ENCODE measurements at regions of chr11 and their contacts with region 1.

Region 1: GRCh38 chr11:116772443-116773202 is at the start of gene BUD13:
- DNase-seq: peak; percentile 96 to 99
- H3K4me3 ChIP-seq: peak within 1 kb of the TSS; percentile 93
- H3K4me3 Mint-ChIP-seq: peak within 1 kb of the TSS; percentile 99
- H3K27ac Mint-ChIP-seq: peak within 1 kb of the TSS; percentile 98
- H3K4me1 ChIP-seq: peaks cover 26% of the 10 kb centered on the region
- H3K4me1 Mint-ChIP-seq: peaks cover 37% of the 10 kb centered on the region
- H3K27me3 ChIP-seq: no peaks in the 10 kb centered on the region
- H3K27me3 Mint-ChIP-seq: no peaks in the 10 kb centered on the region
- CTCF ChIP-seq: peak in 1 of 2 experiments; percentile 54
- total RNA-seq, gene BUD13: 37.8 and 42.6 TPM in 2 replicates

Region 2: GRCh38 chr11:116787786-116788486 is 15.3 kb after region 1 on chr11 and contains the start of gene ZPR1:
- CTCF ChIA-PET with region 1: interaction called, 5 read pairs
- POLR2A ChIA-PET with region 1: interaction called, 5 read pairs
- intact Hi-C with region 1: loop called (anchors 1 kb)
- DNase-seq: peak; percentile 84 to 90
- H3K4me3 ChIP-seq: peak within 1 kb of the TSS; percentile 80
- H3K4me3 Mint-ChIP-seq: peak within 1 kb of the TSS; percentile 80
- H3K27ac Mint-ChIP-seq: peak within 1 kb of the TSS; percentile 94
- H3K4me1 ChIP-seq: peaks cover 46% of the 10 kb centered on the region
- H3K4me1 Mint-ChIP-seq: peaks cover 42% of the 10 kb centered on the region
- H3K27me3 ChIP-seq: no peaks in the 10 kb centered on the region
- H3K27me3 Mint-ChIP-seq: no peaks in the 10 kb centered on the region
- CTCF ChIP-seq: no peak
- total RNA-seq, gene ZPR1: 168 and 194 TPM in 2 replicates

Region 3: GRCh38 chr11:116829525-116830183 is 57.0 kb after region 1 on chr11 and contains the start of gene APOC3:
- CTCF ChIA-PET with region 1: interaction called, 8 read pairs
- POLR2A ChIA-PET with region 1: interaction called, 5 read pairs
- intact Hi-C with region 1: loop called (anchors 1 kb)
- DNase-seq: peak; percentile 93 to 96
- H3K4me3 ChIP-seq: peak within 1 kb of the TSS; percentile 3; the same call in 1 of the 2 replicates
- H3K4me3 Mint-ChIP-seq: peak within 1 kb of the TSS; percentile 50
- H3K27ac Mint-ChIP-seq: peak within 1 kb of the TSS; percentile 89
- H3K4me1 ChIP-seq: peaks cover 84% of the 10 kb centered on the region
- H3K4me1 Mint-ChIP-seq: peaks cover 49% of the 10 kb centered on the region
- H3K27me3 ChIP-seq: no peaks in the 10 kb centered on the region
- H3K27me3 Mint-ChIP-seq: no peaks in the 10 kb centered on the region
- CTCF ChIP-seq: no peak
- total RNA-seq, gene APOC3: 103 and 128 TPM in 2 replicates

Region 4: GRCh38 chr11:116842909-116843308 is 70.3 kb after region 1 on chr11:
- CTCF ChIA-PET with region 1: interaction called, 15 read pairs
- POLR2A ChIA-PET with region 1: interaction called, 10 read pairs
- intact Hi-C with region 1: no loop called
- DNase-seq: peak; percentile 79 to 95
- H3K4me3 ChIP-seq: no peak overlapping the region
- H3K4me3 Mint-ChIP-seq: peak overlapping the region; percentile 50
- H3K27ac Mint-ChIP-seq: peak overlapping the region; percentile 93
- H3K4me1 ChIP-seq: peaks cover 61% of the 10 kb centered on the region
- H3K4me1 Mint-ChIP-seq: peaks cover 45% of the 10 kb centered on the region
- H3K27me3 ChIP-seq: no peaks in the 10 kb centered on the region
- H3K27me3 Mint-ChIP-seq: no peaks in the 10 kb centered on the region
- CTCF ChIP-seq: no peak

Region 5: GRCh38 chr11:117072517-117073461 is 300.2 kb after region 1 on chr11:
- CTCF ChIA-PET with region 1: no interaction called
- POLR2A ChIA-PET with region 1: no interaction called
- intact Hi-C with region 1: loop called (anchors 1 kb)
- DNase-seq: peak in 1 of 2 experiments; percentile 78
- H3K4me3 ChIP-seq: no peak overlapping the region
- H3K4me3 Mint-ChIP-seq: no peak overlapping the region
- H3K27ac Mint-ChIP-seq: peak overlapping the region; percentile 28
- H3K4me1 ChIP-seq: peaks cover 68% of the 10 kb centered on the region
- H3K4me1 Mint-ChIP-seq: peaks cover 57% of the 10 kb centered on the region
- H3K27me3 ChIP-seq: no peaks in the 10 kb centered on the region
- H3K27me3 Mint-ChIP-seq: no peaks in the 10 kb centered on the region
- CTCF ChIP-seq: no peak

Region 6: DNA sequence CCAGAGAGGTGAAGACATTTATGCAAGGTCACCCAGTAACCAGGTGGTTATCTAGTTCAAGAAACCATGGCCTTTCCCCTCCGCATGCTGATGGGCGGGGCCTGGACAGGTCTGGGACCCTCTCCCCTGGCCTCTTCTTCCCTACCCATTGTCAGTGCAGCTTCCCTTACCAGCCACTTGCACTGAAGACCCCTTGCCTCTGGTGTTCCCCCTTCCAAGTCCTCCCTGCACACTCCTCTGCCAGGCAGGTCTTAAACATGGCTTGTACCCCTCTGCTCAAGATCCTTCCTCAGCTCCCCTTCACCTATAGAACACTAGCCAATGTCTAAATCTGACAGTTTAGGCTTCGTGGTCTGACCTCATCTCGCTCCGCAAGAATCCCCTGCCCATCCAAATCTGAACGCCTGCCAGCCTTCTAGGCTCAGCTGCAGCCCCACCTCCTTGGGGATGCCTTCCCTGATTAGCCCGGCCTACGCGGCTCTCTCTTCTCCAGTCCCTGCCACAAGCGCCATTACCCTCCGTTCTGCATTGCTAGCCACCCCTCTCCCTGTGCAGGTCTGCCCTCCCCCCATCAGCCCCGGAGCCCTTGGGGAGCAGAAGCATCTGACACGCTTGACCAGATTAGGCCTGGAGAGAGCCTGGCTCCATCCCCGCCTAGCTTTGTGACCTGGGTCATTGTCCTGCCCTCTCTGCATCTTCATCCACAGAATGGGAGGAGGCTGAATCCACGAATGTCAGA is 810.6 kb after region 1 on chr11:
- CTCF ChIA-PET with region 1: no interaction called
- POLR2A ChIA-PET with region 1: no interaction called
- intact Hi-C with region 1: no loop called
- DNase-seq: peak in 1 of 2 experiments; percentile 36
- H3K4me3 ChIP-seq: no peak overlapping the region
- H3K4me3 Mint-ChIP-seq: no peak overlapping the region
- H3K27ac Mint-ChIP-seq: no peak overlapping the region
- H3K4me1 ChIP-seq: no peaks in the 10 kb centered on the region
- H3K4me1 Mint-ChIP-seq: no peaks in the 10 kb centered on the region
- H3K27me3 ChIP-seq: peaks cover 2% of the 10 kb centered on the region
- H3K27me3 Mint-ChIP-seq: peaks cover 28% of the 10 kb centered on the region
- CTCF ChIP-seq: no peak